Cardiac septum (tissue), 1 donor: ENCODE measurements at regions of chr2 and their contacts with region 1.

Region 1: GRCh38 chr2:30691948-30692828 is 115.1 kb downstream of the CAPN13 start:
- DNase-seq: no peak

Region 2: GRCh38 chr2:30300456-30301221 is 391.5 kb before region 1 on chr2:
- intact Hi-C with region 1: loop called (anchors 5 kb)
- DNase-seq: peak; percentile 74

Region 3: DNA sequence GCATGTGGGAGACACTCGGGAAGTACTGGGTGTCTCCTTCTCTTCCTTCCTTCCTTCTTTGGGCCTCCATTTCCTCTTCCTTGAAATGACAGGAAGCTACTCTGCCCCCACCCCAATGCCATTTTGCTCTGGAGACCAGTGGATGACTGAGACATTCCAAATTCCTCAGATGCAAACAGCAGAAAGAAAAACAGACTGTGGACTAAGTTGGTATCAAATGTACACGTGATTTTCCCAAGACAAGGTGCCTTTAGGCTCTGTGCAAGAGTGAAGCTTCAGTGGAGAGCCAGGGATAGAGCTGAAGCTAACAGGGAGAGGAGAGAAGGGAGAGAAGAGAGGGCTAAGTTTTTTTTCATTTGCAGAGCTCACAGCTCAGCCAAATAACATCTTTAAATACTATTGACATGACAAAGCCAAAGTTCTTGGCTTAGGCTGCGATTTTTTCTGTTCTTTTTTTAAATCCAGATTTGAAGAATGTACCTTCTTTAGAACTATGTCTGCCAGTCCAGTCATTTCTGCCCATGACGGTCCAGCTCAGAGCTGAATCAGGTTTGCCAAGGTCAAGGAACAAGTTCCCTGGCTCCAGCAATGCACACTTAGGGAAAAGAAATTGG is 329.6 kb before region 1 on chr2:
- intact Hi-C with region 1: loop called (anchors 5 kb)
- DNase-seq: no peak

Region 4: GRCh38 chr2:30455114-30455738 is 237.0 kb before region 1 on chr2:
- intact Hi-C with region 1: loop called (anchors 5 kb)
- DNase-seq: no peak

Region 5: GRCh38 chr2:30511122-30512083 is 180.8 kb before region 1 on chr2:
- intact Hi-C with region 1: loop called (anchors 5 kb)
- DNase-seq: no peak